ENCODE measurements at regions of chr1 and their contacts with region 1.

Region 1: DNA sequence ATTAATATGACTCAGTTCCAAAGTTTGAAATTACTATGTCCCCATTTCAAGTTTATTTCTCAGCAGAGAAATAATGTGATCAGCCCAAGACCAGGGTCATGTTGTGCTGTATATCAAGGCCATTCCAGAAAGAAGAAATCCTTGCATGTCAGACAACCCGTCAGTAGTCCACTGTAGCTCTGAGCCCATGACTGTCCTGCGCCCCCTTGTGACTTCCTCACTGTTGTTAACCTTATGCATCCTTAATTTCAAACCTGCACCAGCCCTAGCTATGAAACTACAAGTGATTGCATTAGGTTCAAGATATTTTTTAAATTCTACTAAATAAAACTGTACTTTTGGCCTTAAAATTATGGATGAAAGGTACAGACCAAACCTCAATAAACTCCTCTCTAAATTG is 133.0 kb downstream of the LRRC7 start:
- DNase-seq: peak in 1 of 4 experiments; percentile 44
- ATAC-seq: peak; percentile 84
- H3K4me3 ChIP-seq: no peak overlapping the region
- H3K27ac ChIP-seq: no peak overlapping the region
- H3K4me1 ChIP-seq: no peaks in the 10 kb centered on the region
- H3K27me3 ChIP-seq: no peaks in the 10 kb centered on the region
- CTCF ChIP-seq: peak; percentile 29 to 46 (median 45); a peak in 4 of 6 replicates
- EP300 ChIP-seq: no peak
- POLR2A ChIP-seq: no peak
- RAD21 ChIP-seq: peak in 1 of 2 experiments; percentile 57; a peak in 2 of 4 replicates

Region 2: GRCh38 chr1:69377507-69377906 is 323.3 kb before region 1 on chr1:
- CTCF ChIA-PET with region 1: no interaction called
- POLR2A ChIA-PET with region 1: no interaction called
- in situ Hi-C with region 1: no loop called
- intact Hi-C with region 1: loop called (anchors 1 kb)
- DNase-seq: peak in 2 of 4 experiments; percentile 20 to 52
- ATAC-seq: peak; percentile 77
- H3K4me3 ChIP-seq: no peak overlapping the region
- H3K27ac ChIP-seq: no peak overlapping the region
- H3K4me1 ChIP-seq: no peaks in the 10 kb centered on the region
- H3K27me3 ChIP-seq: no peaks in the 10 kb centered on the region
- CTCF ChIP-seq: peak; percentile 44 to 64 (median 49); a peak in 4 of 6 replicates
- EP300 ChIP-seq: no peak
- POLR2A ChIP-seq: no peak
- RAD21 ChIP-seq: peak; percentile 51 to 63

Region 3: GRCh38 chr1:69747196-69747595 is 46.4 kb after region 1 on chr1:
- CTCF ChIA-PET with region 1: no interaction called
- POLR2A ChIA-PET with region 1: no interaction called
- in situ Hi-C with region 1: no loop called
- intact Hi-C with region 1: no loop called
- DNase-seq: no peak
- ATAC-seq: no peak
- H3K4me3 ChIP-seq: no peak overlapping the region
- H3K27ac ChIP-seq: no peak overlapping the region
- H3K4me1 ChIP-seq: no peaks in the 10 kb centered on the region
- H3K27me3 ChIP-seq: no peaks in the 10 kb centered on the region
- CTCF ChIP-seq: no peak
- EP300 ChIP-seq: no peak
- POLR2A ChIP-seq: no peak
- RAD21 ChIP-seq: no peak